ENCODE measurements at regions of chr12 and their contacts with region 1.

Region 1: GRCh38 chr12:123232807-123233543 is at the starts of genes MPHOSPH9 and MTRFR:
- DNase-seq: peak; percentile 99
- ATAC-seq: peak; percentile 94
- H3K4me3 Mint-ChIP-seq: peak within 1 kb of the TSS; percentile 89
- H3K27ac Mint-ChIP-seq: peak within 1 kb of the TSS; percentile 98
- H3K4me1 Mint-ChIP-seq: peaks cover 18% of the 10 kb centered on the region
- H3K27me3 Mint-ChIP-seq: no peaks in the 10 kb centered on the region
- CTCF ChIP-seq: no peak
- total RNA-seq, gene MPHOSPH9: 47.5 to 59.0 TPM (median 52.8 TPM) in 3 replicates
- total RNA-seq, gene MTRFR: 14.0 to 15.7 TPM (median 14.7 TPM) in 3 replicates

Region 2: GRCh38 chr12:122988612-122989442 is 244.1 kb before region 1 on chr12:
- CTCF ChIA-PET with region 1: interaction called, 18 read pairs
- POLR2A ChIA-PET with region 1: no interaction called
- DNase-seq: no peak
- ATAC-seq: peak; percentile 25
- H3K4me3 Mint-ChIP-seq: no peak overlapping the region
- H3K27ac Mint-ChIP-seq: no peak overlapping the region
- H3K4me1 Mint-ChIP-seq: peaks cover 5% of the 10 kb centered on the region; the same call in 1 of the 2 replicates
- H3K27me3 Mint-ChIP-seq: no peaks in the 10 kb centered on the region
- CTCF ChIP-seq: no peak

Region 3: DNA sequence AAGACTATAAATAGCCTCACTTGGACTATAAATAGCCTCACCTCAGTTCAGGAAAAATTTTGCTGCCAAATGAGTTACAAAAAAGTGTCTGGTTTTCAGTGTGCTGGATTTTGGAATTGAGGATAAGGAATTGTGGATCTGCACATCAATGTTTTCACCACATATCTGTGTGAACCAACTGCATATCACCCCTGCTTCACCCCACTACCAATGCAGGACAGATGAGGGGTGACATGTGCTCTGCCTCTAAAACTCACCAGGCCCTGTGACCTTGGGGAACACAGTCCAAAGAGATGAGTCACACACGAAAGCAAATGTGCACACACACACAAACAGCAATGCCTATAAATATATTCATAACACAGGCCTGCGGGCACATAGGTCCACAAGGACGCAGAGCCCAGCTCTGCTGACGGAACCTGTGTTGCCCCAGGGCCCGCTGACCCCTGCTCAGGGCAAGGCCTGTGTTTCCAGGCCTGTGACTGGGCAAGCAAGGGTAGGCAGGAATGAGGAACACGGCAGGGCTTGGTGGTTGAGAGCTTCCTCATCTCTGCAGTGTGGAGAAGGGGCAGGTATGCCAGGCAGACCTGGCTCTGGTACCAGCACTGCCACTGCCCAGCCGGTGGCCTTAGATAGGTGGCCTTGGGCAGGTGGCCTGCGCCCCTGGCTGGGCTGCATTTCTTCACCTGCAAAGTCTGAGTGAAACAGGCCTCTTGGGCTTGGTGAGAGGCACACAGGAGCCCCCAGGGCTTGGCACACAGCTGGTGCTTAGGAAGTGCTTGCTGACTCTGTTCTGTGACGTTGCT is 170.1 kb before region 1 on chr12:
- CTCF ChIA-PET with region 1: interaction called, 10 read pairs
- POLR2A ChIA-PET with region 1: interaction called, 3 read pairs
- DNase-seq: no peak
- ATAC-seq: no peak
- H3K4me3 Mint-ChIP-seq: no peak overlapping the region
- H3K27ac Mint-ChIP-seq: no peak overlapping the region
- H3K4me1 Mint-ChIP-seq: 0 out of 2 replicates have a peak, but pooled peaks cover 2% of the 10 kb centered on the region
- H3K27me3 Mint-ChIP-seq: no peaks in the 10 kb centered on the region
- CTCF ChIP-seq: no peak

Region 4: GRCh38 chr12:123131879-123132452 is 101.0 kb before region 1 on chr12:
- CTCF ChIA-PET with region 1: no interaction called
- POLR2A ChIA-PET with region 1: no interaction called
- DNase-seq: no peak
- ATAC-seq: no peak
- H3K4me3 Mint-ChIP-seq: no peak overlapping the region
- H3K27ac Mint-ChIP-seq: no peak overlapping the region
- H3K4me1 Mint-ChIP-seq: peaks cover 3% of the 10 kb centered on the region
- H3K27me3 Mint-ChIP-seq: no peaks in the 10 kb centered on the region
- CTCF ChIP-seq: no peak

Region 5: DNA sequence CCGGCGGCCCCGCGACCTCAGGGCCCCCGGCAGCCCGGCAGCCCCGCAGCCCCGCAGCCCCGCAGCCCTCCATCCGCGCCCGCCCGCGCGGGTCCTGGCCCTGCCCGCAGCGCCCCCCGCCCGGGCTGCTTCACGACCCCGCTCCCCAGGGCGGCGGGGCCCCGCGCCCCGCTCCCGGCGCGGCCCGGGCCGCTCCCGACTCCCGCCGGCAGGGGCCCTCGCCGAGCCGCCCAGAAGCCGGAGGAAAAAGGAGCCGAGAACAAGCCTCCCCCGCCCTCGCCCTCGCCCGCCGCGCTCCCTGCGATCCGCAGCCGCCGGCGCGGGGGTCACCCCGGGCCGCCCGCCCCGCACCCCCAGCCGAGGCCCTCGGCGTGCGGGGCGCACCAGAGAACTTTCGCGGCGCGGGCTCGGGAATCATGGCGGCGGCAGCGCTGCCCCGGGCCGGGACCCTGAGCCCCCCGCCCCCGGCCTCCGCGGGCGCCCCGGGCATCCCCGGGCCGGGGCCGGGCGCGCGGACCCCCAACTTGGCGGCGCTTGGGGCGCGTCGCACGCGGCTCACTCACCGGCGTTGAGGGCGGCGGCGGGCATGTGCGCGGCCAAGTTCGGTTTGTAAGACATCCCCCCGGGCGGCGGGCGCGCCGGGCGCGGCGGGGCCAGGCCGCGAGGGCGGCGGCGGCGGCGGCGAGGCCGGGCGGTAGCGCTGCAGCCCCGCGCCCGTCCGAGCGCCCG is 38.2 kb after region 1 on chr12:
- CTCF ChIA-PET with region 1: interaction called, 15 read pairs
- POLR2A ChIA-PET with region 1: interaction called, 15 read pairs
- DNase-seq: peak; percentile 75
- ATAC-seq: peak; percentile 27
- H3K4me3 Mint-ChIP-seq: no peak overlapping the region
- H3K27ac Mint-ChIP-seq: no peak overlapping the region
- H3K4me1 Mint-ChIP-seq: peaks cover 37% of the 10 kb centered on the region
- H3K27me3 Mint-ChIP-seq: no peaks in the 10 kb centered on the region
- CTCF ChIP-seq: no peak

Measured in WTC11 (cell line).